IMR-90 (cell line): ENCODE measurements at regions of chr12 and their contacts with region 1.

Region 1: DNA sequence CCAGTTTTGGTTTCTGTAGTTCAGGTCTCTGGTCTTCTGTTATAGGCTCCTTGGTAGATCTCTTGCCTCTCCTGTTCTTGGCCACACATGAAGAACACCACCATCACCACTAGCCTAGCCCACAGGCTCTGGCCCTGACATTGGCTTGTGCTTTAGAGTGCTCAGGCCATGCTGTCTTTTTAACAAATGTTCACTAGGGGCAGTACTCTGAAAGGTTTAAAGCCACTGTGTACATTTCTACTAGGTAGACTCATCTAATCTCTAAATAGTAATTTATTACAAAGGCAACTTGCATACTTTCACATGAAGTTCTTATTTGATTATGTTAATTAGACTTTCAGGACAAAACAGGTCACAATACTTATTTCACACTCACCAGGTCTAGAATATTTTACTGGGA is 38.3 kb downstream of the PDE6H start:
- DNase-seq: no peak
- ATAC-seq: peak; percentile 49
- H3K4me3 ChIP-seq: no peak overlapping the region
- H3K27ac ChIP-seq: no peak overlapping the region
- H3K4me1 ChIP-seq: no peaks in the 10 kb centered on the region
- H3K27me3 ChIP-seq: peaks cover 3% of the 10 kb centered on the region; the same call in 1 of the 2 replicates
- CTCF ChIP-seq: no peak; the same call in 1 of the 2 replicates
- POLR2A ChIP-seq: no peak
- RAD21 ChIP-seq: no peak

Region 2: DNA sequence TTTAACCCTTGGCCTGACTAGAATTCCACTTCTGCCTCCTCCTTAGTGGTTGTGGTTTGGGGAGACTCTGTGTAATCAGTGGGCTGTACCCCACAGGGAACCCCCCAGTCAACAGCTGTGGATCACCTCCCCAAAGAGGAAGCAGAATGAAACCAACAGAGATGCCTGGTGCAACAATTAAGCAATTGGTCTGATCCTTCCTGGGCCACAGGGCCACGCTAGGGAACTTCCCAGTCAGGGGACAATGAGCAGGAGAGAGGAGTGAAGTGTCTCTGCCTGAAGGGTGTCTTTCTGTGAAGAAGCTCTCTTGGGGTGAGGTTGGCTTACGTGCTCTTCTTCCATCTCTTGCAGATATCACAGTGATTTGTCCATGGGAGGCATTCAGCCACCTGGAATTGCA is 30.1 kb before region 1 on chr12:
- CTCF ChIA-PET with region 1: no interaction called
- POLR2A ChIA-PET with region 1: no interaction called
- dilution Hi-C with region 1: no loop called
- in situ Hi-C with region 1: no loop called
- intact Hi-C with region 1: no loop called
- DNase-seq: no peak
- ATAC-seq: no peak
- H3K4me3 ChIP-seq: no peak overlapping the region
- H3K27ac ChIP-seq: no peak overlapping the region
- H3K4me1 ChIP-seq: peaks cover 2% of the 10 kb centered on the region; the same call in 1 of the 2 replicates
- H3K27me3 ChIP-seq: peaks cover 3% of the 10 kb centered on the region; the same call in 1 of the 2 replicates
- CTCF ChIP-seq: no peak
- POLR2A ChIP-seq: no peak
- RAD21 ChIP-seq: no peak

Region 3: DNA sequence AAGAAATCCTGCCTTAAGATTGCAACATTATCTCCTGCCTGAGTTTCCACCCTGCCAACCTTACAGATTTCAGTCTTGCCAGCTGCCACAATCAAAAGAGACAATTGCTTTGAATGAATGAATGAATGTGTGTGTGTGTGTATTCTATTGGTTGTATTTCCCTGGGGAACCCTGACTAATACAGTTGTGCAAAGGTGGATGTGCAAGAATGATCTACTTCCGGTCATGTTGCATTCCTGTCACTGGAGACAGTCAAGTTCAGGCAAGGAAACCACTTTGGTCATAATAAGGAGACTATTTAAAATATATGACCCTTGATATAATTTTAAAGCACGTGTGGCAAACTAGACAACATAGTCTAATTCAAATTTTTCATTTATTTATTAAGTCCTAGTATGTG is 197.0 kb after region 1 on chr12:
- CTCF ChIA-PET with region 1: no interaction called
- POLR2A ChIA-PET with region 1: no interaction called
- dilution Hi-C with region 1: no loop called
- in situ Hi-C with region 1: loop called (anchors 10 kb)
- intact Hi-C with region 1: no loop called
- DNase-seq: no peak
- ATAC-seq: no peak
- H3K4me3 ChIP-seq: no peak overlapping the region
- H3K27ac ChIP-seq: no peak overlapping the region
- H3K4me1 ChIP-seq: no peaks in the 10 kb centered on the region
- H3K27me3 ChIP-seq: no peaks in the 10 kb centered on the region
- CTCF ChIP-seq: peak; percentile 26; the same call in 1 of the 2 replicates
- POLR2A ChIP-seq: no peak
- RAD21 ChIP-seq: no peak